Right ventricle myocardium inferior (tissue), 1 donor: ENCODE measurements at regions of chr19 and their contacts with region 1.

Region 1: GRCh38 chr19:4968462-4969291 is at the start of gene KDM4B:
- DNase-seq: peak; percentile 100
- ATAC-seq: peak; percentile 97
- total RNA-seq, gene KDM4B: 38.6 TPM

Region 2: GRCh38 chr19:4867534-4868285 is 101.0 kb before region 1 on chr19 and contains the start of gene PLIN3:
- intact Hi-C with region 1: loop called (anchors 5 kb)
- DNase-seq: peak; percentile 99
- ATAC-seq: peak; percentile 98
- total RNA-seq, gene PLIN3: 34.0 TPM

Region 3: GRCh38 chr19:4993683-4994082 is 25.0 kb after region 1 on chr19:
- intact Hi-C with region 1: no loop called
- DNase-seq: no peak
- ATAC-seq: no peak

Region 4: DNA sequence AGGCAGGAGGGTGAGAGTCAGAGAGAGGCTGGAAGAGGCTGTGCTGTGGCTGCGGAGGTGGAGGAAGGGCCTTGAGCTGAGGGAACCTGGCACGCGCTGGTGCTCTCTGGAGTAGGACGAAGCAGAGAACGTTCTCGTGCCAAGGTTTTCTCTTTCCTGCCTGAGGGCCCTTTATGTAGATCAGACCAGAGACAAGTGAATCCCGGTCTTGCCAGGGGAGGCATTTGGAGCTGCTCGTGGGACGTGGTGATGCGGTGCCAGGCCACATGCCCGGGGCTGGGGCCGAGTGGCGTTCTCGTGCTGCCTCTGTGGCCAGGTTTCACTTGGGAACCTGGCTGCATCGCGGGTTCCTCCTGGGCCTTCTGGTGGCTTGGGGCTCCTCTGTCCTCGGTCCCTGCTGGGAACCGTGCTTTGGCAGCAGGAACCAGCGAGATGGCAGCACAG is 54.5 kb after region 1 on chr19:
- intact Hi-C with region 1: loop called (anchors 2 kb)
- DNase-seq: peak; percentile 70
- ATAC-seq: peak; percentile 60